ENCODE measurements at regions of chr12 and their contacts with region 1.

Region 1: DNA sequence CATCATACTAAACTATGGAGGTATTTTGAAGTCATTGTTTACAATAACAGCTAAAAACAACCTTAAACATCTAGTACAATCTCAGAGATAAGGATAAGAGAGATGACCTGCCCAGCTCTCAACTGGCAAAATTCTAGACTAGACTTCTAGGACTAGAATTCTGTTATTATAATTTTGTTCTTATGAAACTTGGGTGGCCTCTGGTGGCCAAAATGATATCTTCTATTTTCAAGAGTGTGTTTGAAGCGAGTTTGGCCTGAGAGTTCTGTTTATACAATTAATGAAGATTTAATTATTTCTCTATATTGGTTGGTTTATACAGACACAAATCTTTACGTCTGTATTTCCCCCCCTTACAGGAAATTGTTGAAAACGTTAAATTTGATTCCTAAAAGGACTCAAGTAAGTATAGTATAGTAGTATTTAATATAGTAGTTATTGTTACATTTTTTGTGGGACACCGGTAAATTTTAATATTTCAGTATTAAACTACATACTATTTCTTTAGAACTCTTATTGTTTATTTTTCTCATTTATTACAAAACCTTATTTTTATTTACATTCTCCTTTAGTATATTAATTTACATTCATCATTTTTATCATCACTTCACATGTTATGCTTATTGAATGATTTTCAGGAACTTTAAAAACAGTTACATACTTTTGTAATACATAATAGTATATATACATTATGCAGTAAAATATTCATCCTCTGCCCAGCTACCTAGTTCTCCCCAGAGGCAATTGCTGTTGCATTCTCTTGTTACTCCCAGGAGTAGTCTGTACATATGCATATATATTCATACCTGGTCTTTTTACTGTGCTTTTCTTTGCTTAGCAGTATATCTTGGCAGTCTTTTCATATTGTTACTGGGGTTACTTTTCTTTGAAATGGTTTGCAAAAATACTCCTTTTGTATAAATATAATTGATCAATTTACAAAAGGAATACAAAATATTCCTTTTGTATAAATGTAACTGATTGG is 6.6 kb downstream of the PPHLN1 start:
- DNase-seq: peak in 1 of 2 experiments; percentile 55
- H3K4me3 ChIP-seq: no peak overlapping the region
- H3K4me3 Mint-ChIP-seq: no peak overlapping the region
- H3K27ac Mint-ChIP-seq: no peak overlapping the region
- H3K4me1 ChIP-seq: peaks cover under 1% of the 10 kb centered on the region; the same call in 1 of the 2 replicates
- H3K4me1 Mint-ChIP-seq: peaks cover 13% of the 10 kb centered on the region
- H3K27me3 ChIP-seq: no peaks in the 10 kb centered on the region
- H3K27me3 Mint-ChIP-seq: no peaks in the 10 kb centered on the region
- CTCF ChIP-seq: peak; percentile 62 to 67

Region 2: GRCh38 chr12:41684997-41685396 is 647.6 kb before region 1 on chr12:
- CTCF ChIA-PET with region 1: no interaction called
- POLR2A ChIA-PET with region 1: no interaction called
- intact Hi-C with region 1: loop called (anchors 2 kb)
- DNase-seq: peak in 1 of 2 experiments; percentile 46
- H3K4me3 ChIP-seq: no peak overlapping the region
- H3K4me3 Mint-ChIP-seq: no peak overlapping the region
- H3K27ac Mint-ChIP-seq: no peak overlapping the region
- H3K4me1 ChIP-seq: no peaks in the 10 kb centered on the region
- H3K4me1 Mint-ChIP-seq: no peaks in the 10 kb centered on the region
- H3K27me3 ChIP-seq: no peaks in the 10 kb centered on the region
- H3K27me3 Mint-ChIP-seq: peaks cover 3% of the 10 kb centered on the region
- CTCF ChIP-seq: peak; percentile 52 to 65

Region 3: GRCh38 chr12:42144408-42145196 is 188.0 kb before region 1 on chr12 and contains the start of gene GXYLT1:
- CTCF ChIA-PET with region 1: interaction called, 3 read pairs
- POLR2A ChIA-PET with region 1: no interaction called
- intact Hi-C with region 1: loop called (anchors 2 kb)
- DNase-seq: peak; percentile 97 to 98
- H3K4me3 ChIP-seq: peak within 1 kb of the TSS; percentile 69
- H3K4me3 Mint-ChIP-seq: peak within 1 kb of the TSS; percentile 82
- H3K27ac Mint-ChIP-seq: peak within 1 kb of the TSS; percentile 84
- H3K4me1 ChIP-seq: peaks cover 31% of the 10 kb centered on the region
- H3K4me1 Mint-ChIP-seq: peaks cover 35% of the 10 kb centered on the region
- H3K27me3 ChIP-seq: no peaks in the 10 kb centered on the region
- H3K27me3 Mint-ChIP-seq: no peaks in the 10 kb centered on the region
- CTCF ChIP-seq: no peak
- total RNA-seq, gene GXYLT1: 25.7 and 28.1 TPM in 2 replicates

Region 4: GRCh38 chr12:42237052-42237852 is 95.3 kb before region 1 on chr12:
- CTCF ChIA-PET with region 1: no interaction called
- POLR2A ChIA-PET with region 1: no interaction called
- intact Hi-C with region 1: loop called (anchors 2 kb)
- DNase-seq: peak; percentile 82 to 84
- H3K4me3 ChIP-seq: peak overlapping the region; percentile 83
- H3K4me3 Mint-ChIP-seq: peak overlapping the region; percentile 75
- H3K27ac Mint-ChIP-seq: peak overlapping the region; percentile 33
- H3K4me1 ChIP-seq: peaks cover 9% of the 10 kb centered on the region
- H3K4me1 Mint-ChIP-seq: peaks cover 9% of the 10 kb centered on the region
- H3K27me3 ChIP-seq: no peaks in the 10 kb centered on the region
- H3K27me3 Mint-ChIP-seq: no peaks in the 10 kb centered on the region
- CTCF ChIP-seq: peak; percentile 9 to 33

Region 5: DNA sequence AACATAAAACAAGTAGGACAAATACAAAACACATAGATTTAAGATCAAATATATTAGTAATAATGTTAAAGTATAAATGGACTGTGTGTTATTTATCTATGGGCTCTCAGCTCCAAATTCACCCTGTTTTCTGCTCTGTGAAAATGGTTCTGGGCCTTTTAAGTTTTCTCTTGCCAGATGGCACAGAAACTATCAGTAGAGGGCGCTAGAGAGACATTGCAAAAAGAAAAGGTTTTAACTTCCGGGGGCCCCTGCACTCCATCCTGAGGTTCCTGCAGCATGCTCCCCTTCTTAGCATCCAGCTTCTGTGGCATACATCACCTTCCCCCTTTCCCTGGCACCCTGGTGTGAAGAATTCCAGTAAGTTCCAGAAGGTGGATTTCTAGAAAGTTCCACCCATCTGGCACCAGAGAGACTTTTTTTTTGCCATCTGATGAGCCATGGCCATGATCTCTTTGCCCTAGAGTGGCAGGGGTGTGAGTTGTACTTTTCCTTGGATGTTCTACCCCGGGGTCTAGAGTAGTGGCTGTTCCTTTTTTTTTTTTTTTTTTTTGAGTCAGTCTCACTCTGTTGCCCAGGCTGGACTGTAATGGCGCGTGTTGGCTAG is 36.0 kb before region 1 on chr12:
- CTCF ChIA-PET with region 1: no interaction called
- POLR2A ChIA-PET with region 1: no interaction called
- intact Hi-C with region 1: loop called (anchors 1 kb)
- DNase-seq: peak in 1 of 2 experiments; percentile 59
- H3K4me3 ChIP-seq: no peak overlapping the region
- H3K4me3 Mint-ChIP-seq: no peak overlapping the region
- H3K27ac Mint-ChIP-seq: no peak overlapping the region
- H3K4me1 ChIP-seq: no peaks in the 10 kb centered on the region
- H3K4me1 Mint-ChIP-seq: peaks cover 7% of the 10 kb centered on the region
- H3K27me3 ChIP-seq: no peaks in the 10 kb centered on the region
- H3K27me3 Mint-ChIP-seq: no peaks in the 10 kb centered on the region
- CTCF ChIP-seq: peak; percentile 58 to 79

Region 6: DNA sequence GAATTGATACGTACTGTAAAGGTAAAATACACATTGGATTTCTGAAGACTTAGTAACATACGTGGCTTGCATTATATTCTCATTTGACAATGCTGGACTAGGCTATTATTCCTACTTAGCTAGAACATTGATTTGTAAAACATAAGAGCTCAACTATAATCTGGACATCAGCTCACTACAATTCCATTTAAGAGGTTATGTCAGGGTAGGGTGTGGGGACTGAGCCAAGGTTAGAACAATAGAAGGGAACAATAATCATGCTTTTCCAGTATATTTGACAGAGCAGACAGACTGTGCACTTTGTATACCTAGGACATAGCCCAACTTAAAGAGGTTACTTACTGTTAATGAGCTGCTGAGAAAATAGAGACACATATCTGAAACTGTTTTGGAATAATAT is 17.5 kb before region 1 on chr12:
- CTCF ChIA-PET with region 1: no interaction called
- POLR2A ChIA-PET with region 1: no interaction called
- intact Hi-C with region 1: no loop called
- DNase-seq: no peak
- H3K4me3 ChIP-seq: no peak overlapping the region
- H3K4me3 Mint-ChIP-seq: no peak overlapping the region
- H3K27ac Mint-ChIP-seq: no peak overlapping the region
- H3K4me1 ChIP-seq: no peaks in the 10 kb centered on the region
- H3K4me1 Mint-ChIP-seq: no peaks in the 10 kb centered on the region
- H3K27me3 ChIP-seq: no peaks in the 10 kb centered on the region
- H3K27me3 Mint-ChIP-seq: no peaks in the 10 kb centered on the region
- CTCF ChIP-seq: no peak

Region 7: DNA sequence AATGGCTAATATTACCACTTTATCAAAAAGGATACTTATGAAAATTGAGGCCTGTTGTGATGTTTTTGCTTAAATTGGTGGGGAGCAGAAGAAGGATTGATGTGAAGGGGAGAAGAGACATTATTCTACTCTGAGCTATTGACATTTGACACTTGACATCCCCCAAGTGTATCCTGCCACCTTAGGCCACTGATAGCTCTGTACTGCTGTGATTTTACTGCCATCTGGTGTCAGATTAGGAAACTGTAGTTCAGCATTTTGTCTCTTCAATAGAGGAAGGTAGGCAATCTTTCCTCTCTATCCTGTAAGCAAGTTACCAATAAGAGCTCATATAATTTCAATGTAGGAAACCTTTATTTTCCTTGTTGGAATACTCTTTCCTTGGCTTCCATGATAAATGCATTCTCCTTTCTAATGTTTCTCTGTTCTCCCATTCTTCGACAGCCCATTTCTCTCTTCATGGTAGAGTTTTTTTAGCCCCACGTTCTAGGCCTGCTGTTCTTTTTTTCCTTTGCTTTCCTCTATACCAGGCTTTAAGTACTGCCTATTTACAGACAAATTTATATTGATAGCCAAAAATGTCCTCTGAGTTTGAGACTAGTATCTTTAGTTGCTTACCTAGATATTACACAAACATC is 39.7 kb after region 1 on chr12:
- CTCF ChIA-PET with region 1: interaction called, 4 read pairs
- POLR2A ChIA-PET with region 1: no interaction called
- intact Hi-C with region 1: loop called (anchors 1 kb)
- DNase-seq: peak in 1 of 2 experiments; percentile 70
- H3K4me3 ChIP-seq: no peak overlapping the region
- H3K4me3 Mint-ChIP-seq: no peak overlapping the region
- H3K27ac Mint-ChIP-seq: no peak overlapping the region
- H3K4me1 ChIP-seq: no peaks in the 10 kb centered on the region
- H3K4me1 Mint-ChIP-seq: peaks cover 16% of the 10 kb centered on the region
- H3K27me3 ChIP-seq: no peaks in the 10 kb centered on the region
- H3K27me3 Mint-ChIP-seq: no peaks in the 10 kb centered on the region
- CTCF ChIP-seq: peak; percentile 81 to 85

Region 8: GRCh38 chr12:42407306-42407705 is 74.7 kb after region 1 on chr12:
- CTCF ChIA-PET with region 1: no interaction called
- POLR2A ChIA-PET with region 1: no interaction called
- intact Hi-C with region 1: no loop called
- DNase-seq: no peak
- H3K4me3 ChIP-seq: no peak overlapping the region
- H3K4me3 Mint-ChIP-seq: no peak overlapping the region
- H3K27ac Mint-ChIP-seq: no peak overlapping the region
- H3K4me1 ChIP-seq: peaks cover 13% of the 10 kb centered on the region
- H3K4me1 Mint-ChIP-seq: peaks cover 13% of the 10 kb centered on the region
- H3K27me3 ChIP-seq: no peaks in the 10 kb centered on the region
- H3K27me3 Mint-ChIP-seq: no peaks in the 10 kb centered on the region
- CTCF ChIP-seq: no peak

Measured in Caco-2 (cell line).